ENCODE measurements at regions of chr14 and their contacts with region 1.

Region 1: GRCh38 chr14:73633116-73634010 is 11.4 kb upstream of the DNAL1 start:
- DNase-seq: peak; percentile 68
- H3K4me3 Mint-ChIP-seq: peak overlapping the region; percentile 79
- H3K27ac Mint-ChIP-seq: no peak overlapping the region
- H3K4me1 Mint-ChIP-seq: no peaks in the 10 kb centered on the region
- H3K27me3 Mint-ChIP-seq: no peaks in the 10 kb centered on the region
- CTCF ChIP-seq: peak; percentile 73

Region 2: DNA sequence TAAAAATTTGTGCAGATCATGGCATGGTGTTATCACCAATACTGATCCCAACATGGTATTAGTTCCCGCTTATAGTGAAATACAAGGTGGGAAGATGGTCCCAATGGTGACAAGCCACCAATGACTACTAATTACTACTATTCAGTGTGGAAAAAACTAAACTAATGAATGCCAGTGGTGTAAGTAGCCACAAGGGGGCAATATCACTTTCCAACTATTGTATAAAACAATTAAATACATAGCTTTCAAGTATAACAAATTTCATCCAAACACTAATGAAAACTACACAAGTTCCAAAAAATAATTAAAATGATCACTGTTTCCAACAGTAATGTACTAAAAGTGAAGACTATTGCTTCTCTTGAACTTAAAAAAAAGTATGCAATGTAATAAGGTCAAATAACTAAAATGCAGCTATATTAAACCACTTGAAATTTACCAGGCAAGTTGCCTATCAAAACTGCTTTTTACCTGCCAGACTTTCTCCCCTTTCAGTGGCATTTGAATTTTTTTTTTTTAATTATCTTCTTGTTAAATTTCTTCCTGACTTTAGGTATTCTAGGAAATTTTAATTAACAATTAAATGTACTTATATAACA is 338.1 kb before region 1 on chr14:
- CTCF ChIA-PET with region 1: no interaction called
- intact Hi-C with region 1: loop called (anchors 2 kb)
- DNase-seq: peak; percentile 19
- H3K4me3 Mint-ChIP-seq: no peak overlapping the region
- H3K27ac Mint-ChIP-seq: no peak overlapping the region
- H3K4me1 Mint-ChIP-seq: peaks cover 19% of the 10 kb centered on the region
- H3K27me3 Mint-ChIP-seq: no peaks in the 10 kb centered on the region
- CTCF ChIP-seq: peak; percentile 47

Region 3: DNA sequence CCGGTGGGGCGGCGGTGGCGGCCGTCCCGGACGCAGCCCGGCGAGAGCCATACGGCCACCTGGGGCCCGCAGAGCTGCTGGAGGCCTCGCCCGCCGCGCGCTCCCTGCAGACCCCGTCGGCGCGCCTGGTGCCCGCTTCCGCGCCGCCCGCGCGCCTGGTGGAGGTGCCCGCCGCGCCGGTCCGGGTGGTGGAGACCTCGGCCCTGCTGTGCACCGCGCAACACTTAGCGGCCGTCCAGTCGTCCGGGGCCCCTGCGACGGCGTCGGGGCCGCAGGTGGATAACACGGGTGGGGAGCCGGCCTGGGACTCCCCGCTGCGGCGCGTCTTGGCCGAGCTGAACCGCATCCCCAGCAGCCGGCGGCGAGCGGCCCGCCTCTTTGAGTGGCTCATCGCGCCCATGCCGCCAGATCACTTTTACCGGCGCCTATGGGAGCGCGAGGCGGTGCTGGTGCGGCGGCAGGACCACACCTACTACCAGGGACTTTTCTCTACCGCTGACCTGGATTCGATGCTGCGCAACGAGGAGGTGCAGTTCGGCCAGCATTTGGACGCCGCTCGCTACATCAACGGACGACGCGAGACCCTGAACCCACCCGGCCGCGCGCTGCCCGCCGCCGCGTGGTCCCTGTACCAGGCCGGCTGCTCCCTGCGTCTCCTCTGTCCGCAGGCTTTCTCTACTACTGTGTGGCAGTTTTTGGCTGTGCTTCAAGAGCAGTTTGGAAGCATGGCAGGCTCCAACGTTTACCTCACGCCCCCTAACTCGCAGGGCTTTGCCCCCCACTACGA is 141.9 kb before region 1 on chr14:
- CTCF ChIA-PET with region 1: interaction called, 3 read pairs
- intact Hi-C with region 1: loop called (anchors 5 kb)
- DNase-seq: peak; percentile 57
- H3K4me3 Mint-ChIP-seq: peak overlapping the region; percentile 98
- H3K27ac Mint-ChIP-seq: no peak overlapping the region
- H3K4me1 Mint-ChIP-seq: peaks cover 12% of the 10 kb centered on the region
- H3K27me3 Mint-ChIP-seq: no peaks in the 10 kb centered on the region
- CTCF ChIP-seq: no peak

Region 4: GRCh38 chr14:73503648-73504047 is 129.7 kb before region 1 on chr14:
- CTCF ChIA-PET with region 1: interaction called, 26 read pairs
- intact Hi-C with region 1: loop called (anchors 1 kb)
- DNase-seq: no peak
- H3K4me3 Mint-ChIP-seq: no peak overlapping the region
- H3K27ac Mint-ChIP-seq: no peak overlapping the region
- H3K4me1 Mint-ChIP-seq: no peaks in the 10 kb centered on the region
- H3K27me3 Mint-ChIP-seq: no peaks in the 10 kb centered on the region
- CTCF ChIP-seq: no peak

Region 5: DNA sequence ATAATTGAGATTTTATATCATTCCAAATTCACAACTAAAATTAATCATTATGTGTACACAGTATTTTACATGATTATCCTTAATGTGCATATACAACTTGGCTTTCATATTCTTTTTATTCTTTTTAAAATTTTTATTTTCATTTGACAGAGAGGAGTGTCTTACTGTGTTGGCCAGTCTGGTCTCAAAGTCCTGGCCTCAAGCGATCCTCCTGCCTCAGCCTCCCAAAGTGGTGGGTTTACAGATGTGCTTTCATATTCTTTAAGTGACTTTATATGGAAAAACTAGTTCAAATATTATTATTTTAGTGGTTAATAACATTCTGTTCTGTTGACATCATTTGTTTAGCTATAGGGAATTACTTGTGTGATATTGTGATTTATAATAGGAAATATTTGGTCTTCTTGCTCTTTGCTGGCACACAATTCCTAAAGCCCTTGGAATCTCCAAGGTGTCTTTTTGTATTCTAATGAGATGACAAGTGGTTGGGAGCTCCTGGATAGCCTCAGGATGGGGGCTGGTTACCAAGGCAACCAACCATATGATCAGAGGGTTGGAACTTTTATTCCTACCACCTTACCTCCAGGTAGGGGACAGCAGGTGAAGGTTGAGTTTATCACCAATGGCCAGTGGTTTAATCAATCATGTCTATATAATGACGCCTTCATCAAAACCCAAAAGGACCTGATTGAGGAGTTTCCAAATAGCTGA is 237.3 kb after region 1 on chr14:
- CTCF ChIA-PET with region 1: no interaction called
- intact Hi-C with region 1: loop called (anchors 2 kb)
- DNase-seq: no peak
- H3K4me3 Mint-ChIP-seq: no peak overlapping the region
- H3K27ac Mint-ChIP-seq: no peak overlapping the region
- H3K4me1 Mint-ChIP-seq: no peaks in the 10 kb centered on the region
- H3K27me3 Mint-ChIP-seq: no peaks in the 10 kb centered on the region
- CTCF ChIP-seq: no peak

Region 6: DNA sequence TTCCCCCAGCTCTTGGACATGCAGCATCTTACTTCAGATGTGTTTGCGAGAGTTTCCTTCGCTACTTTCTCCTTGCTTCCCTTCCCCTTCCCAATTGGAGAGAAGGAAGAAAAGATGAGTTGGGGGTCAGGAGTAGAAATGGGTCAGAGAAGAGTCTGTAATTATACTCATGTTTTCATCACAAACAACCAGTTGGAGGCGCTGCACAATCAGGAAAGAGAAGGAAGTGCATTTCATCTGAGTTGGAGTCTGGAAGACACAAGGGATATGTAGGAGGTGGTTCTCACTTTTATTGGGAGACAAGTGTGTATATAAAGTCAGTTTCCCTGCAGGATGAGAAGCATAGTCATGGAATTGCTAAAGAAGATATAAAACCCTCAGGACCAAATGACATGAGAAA is 574.6 kb after region 1 on chr14:
- CTCF ChIA-PET with region 1: no interaction called
- intact Hi-C with region 1: no loop called
- DNase-seq: no peak
- H3K4me3 Mint-ChIP-seq: no peak overlapping the region
- H3K27ac Mint-ChIP-seq: no peak overlapping the region
- H3K4me1 Mint-ChIP-seq: no peaks in the 10 kb centered on the region
- H3K27me3 Mint-ChIP-seq: peaks cover 33% of the 10 kb centered on the region
- CTCF ChIP-seq: no peak